Transverse colon (tissue), 4 donors: ENCODE measurements at regions of chr6 and their contacts with region 1.

Region 1: GRCh38 chr6:161370880-161371279 is 97.0 kb upstream of the AGPAT4 start:
- DNase-seq: peak; percentile 62
- H3K4me3 ChIP-seq: no peak overlapping the region
- H3K27ac ChIP-seq: no peak overlapping the region
- H3K4me1 ChIP-seq: peaks cover 1 to 9% (median 5%) of the 10 kb centered on the region in 4 donors
- H3K27me3 ChIP-seq: no peaks in the 10 kb centered on the region
- CTCF ChIP-seq: peak; percentile 84 to 90 (median 85)
- EP300 ChIP-seq: no peak
- POLR2A ChIP-seq: no peak

Region 2: DNA sequence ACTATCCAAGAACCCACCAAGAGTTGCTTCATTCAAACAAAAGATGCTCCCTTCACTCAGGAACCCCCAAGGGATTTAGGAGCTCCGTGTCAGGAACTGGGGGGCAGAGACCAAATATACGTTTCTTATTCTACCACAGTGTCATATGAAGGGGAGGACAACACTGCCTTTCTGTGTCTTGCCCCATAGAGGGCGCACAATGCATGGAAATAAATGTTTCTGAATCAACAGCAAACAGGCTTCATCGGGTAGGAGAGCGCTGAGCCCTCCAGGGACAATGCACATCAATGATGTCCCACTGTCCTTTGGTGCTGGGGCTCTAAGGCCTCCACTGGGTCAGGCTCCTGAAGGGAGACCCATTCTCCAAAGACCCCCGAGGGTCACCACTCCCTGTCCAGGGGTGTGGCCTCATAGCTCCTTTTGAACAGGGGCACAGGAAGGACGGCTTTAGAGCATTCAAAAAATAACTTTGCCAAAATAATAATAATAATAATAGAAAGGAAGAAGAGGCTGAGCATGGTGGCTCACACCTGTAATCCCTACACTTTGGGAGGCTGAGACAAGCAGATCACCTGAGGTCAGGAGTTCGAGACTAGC is 637.7 kb before region 1 on chr6:
- in situ Hi-C with region 1: loop called (anchors 25 kb)
- intact Hi-C with region 1: no loop called
- DNase-seq: peak; percentile 13
- H3K4me3 ChIP-seq: no peak overlapping the region
- H3K27ac ChIP-seq: no peak overlapping the region
- H3K4me1 ChIP-seq: no peaks in the 10 kb centered on the region
- H3K27me3 ChIP-seq: no peaks in the 10 kb centered on the region
- CTCF ChIP-seq: peak; percentile 33 to 56 (median 50)
- EP300 ChIP-seq: no peak
- POLR2A ChIP-seq: no peak

Region 3: DNA sequence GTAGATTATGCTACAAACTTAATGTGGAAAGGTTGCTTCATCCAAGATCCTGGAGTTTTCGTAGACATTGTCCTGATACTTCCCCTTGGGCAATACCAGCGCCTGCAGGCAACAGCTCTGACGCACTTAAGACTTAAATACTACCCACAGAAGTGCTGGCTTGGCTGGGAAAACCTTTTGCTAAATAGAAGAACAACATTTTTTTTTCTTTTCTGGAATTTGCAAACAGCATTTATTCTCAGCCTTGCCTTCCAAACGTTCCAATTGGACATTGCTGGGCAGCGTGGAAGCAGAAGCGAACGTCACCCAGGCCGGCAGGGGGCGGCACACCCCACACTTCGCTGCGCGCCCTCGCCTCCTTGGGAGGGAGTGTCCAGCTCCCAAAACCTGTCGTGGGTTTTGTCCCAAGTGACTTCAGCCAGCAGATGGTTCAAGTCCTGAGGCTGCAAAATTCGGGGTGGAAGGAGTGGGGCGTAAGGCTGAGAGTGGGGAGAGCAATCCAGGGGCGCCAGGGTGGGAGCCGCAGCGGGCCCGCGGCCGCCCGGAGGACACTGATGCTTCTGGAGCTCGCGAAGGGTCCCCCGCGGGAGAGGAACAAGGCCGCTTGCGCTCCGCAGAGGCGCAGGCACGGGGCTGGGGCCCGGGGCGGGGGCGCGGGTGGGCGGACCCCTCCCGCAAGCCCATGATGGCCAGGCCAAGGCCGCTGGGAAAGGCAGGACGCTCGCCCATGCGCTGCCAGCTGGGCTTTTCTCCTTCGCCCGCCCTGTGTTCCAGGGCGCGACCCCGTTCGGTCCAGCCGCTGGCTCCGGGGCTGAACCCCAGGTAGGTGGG is 440.1 kb before region 1 on chr6:
- in situ Hi-C with region 1: loop called (anchors 5 to 10 kb)
- intact Hi-C with region 1: loop called (anchors 5 kb)
- DNase-seq: peak; percentile 69
- H3K4me3 ChIP-seq: peak overlapping the region; percentile 21 to 41 (median 30)
- H3K27ac ChIP-seq: peak overlapping the region in 1 of 4 donors; percentile 3
- H3K4me1 ChIP-seq: peaks cover 0 to 11% (median 6%) of the 10 kb centered on the region in 4 donors
- H3K27me3 ChIP-seq: peaks cover 33% of the 10 kb centered on the region
- CTCF ChIP-seq: peak; percentile 83 to 92 (median 87)
- EP300 ChIP-seq: no peak
- POLR2A ChIP-seq: no peak

Region 4: DNA sequence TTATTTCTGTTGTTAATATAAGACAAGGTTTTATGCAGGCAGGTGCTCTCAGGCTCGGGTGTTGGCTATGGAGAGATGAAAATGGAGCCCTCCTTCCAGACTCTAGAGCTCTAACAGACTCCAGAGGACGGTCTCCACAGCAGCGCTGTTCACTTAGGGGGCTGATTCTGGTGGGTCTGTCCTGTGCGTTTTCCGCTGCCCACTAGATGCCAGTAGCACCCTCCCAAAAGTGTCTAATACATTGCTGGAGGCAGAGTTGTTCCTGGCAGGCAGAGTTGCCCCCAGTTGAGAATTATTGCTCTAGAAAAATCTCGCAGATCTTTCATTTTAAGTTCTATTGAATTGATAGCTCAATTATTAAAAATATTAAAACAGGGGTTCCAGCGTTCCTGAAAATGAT is 269.4 kb before region 1 on chr6:
- in situ Hi-C with region 1: loop called in 1 of 4 experiments (anchors 25 kb)
- intact Hi-C with region 1: no loop called
- DNase-seq: no peak
- H3K4me3 ChIP-seq: no peak overlapping the region
- H3K27ac ChIP-seq: no peak overlapping the region
- H3K4me1 ChIP-seq: no peaks in the 10 kb centered on the region
- H3K27me3 ChIP-seq: no peaks in the 10 kb centered on the region
- CTCF ChIP-seq: peak in 1 of 5 experiments; percentile 4
- EP300 ChIP-seq: no peak
- POLR2A ChIP-seq: no peak

Region 5: DNA sequence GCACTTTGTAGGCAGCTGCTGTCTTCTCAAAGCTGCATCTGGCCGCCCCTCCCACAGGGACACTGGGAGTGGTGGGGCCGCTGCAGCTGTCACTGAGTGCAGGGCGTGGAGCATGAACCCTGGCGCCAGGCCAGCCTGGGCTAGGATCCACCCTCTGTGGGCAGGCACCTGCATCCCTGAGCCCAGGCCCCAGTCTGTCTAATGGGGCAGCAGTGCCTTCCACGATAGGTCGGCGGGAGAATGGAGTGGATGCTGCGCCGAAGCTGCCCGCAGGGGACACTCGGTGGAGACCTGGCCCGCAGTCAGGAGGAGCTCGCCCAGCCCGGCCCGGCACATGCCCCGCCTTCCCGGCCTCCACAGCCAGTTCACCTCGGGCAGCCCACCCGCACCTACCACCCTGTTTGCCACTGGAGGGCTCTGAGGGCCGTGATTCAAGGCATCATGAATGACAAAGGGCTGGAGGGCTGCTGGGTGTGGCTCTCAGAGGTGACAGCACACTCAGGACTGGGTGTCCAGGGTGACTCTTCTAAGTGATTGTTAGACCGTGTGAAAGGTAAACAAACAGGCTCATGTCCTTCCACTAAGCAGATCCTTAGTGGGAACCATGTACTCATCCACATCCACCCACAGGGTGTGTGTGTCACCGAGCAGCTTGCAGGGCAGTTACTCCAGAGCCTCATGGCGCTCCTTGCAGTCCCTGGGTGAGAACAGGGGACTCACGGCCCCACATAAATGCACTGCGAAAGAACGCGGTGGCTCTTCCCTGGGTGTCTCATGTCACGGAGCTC is 230.9 kb before region 1 on chr6:
- in situ Hi-C with region 1: loop called in 1 of 4 experiments (anchors 25 kb)
- intact Hi-C with region 1: no loop called
- DNase-seq: peak; percentile 72
- H3K4me3 ChIP-seq: no peak overlapping the region
- H3K27ac ChIP-seq: no peak overlapping the region
- H3K4me1 ChIP-seq: no peaks in the 10 kb centered on the region
- H3K27me3 ChIP-seq: no peaks in the 10 kb centered on the region
- CTCF ChIP-seq: peak in 1 of 5 experiments; percentile 42
- EP300 ChIP-seq: no peak
- POLR2A ChIP-seq: no peak

Region 6: DNA sequence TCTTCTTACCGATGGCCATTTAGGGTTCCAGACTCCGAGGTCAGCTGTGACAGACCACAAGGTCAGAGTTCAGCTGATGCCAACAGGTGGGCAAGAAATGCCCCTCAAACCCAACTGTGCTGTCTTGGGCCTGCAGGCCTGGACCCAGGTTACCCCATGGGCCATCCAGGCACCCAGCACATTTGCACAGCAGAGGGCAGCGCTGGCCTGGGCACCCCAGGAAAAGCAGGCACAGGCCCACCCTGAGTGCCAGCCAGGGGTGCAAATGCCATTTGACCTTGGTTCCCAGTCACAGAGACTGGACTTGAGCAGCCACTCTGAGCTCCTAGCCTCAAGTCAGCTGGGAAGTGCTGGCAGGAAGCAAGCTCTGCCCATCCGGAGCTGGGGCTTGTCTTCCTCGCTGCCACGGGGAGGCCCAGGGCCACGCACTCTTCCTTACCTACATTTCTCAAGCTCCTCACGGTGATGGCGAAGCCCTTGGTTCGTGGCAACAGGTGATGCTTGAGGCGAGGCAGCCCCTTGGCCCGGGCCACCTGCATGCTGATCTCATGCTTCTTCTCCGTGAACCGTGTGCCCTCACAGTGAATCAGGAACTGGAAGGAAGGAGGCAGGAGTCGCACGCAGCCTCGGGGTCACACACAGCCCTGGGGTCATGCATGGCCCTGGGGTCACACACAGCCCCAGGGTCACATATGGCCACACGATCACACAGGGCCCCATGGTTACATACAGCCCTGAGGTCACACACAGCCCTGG is 217.8 kb before region 1 on chr6:
- in situ Hi-C with region 1: loop called in 2 of 4 experiments (anchors 25 kb)
- intact Hi-C with region 1: loop called (anchors 10 kb)
- DNase-seq: no peak
- H3K4me3 ChIP-seq: no peak overlapping the region
- H3K27ac ChIP-seq: no peak overlapping the region
- H3K4me1 ChIP-seq: no peaks in the 10 kb centered on the region
- H3K27me3 ChIP-seq: no peaks in the 10 kb centered on the region
- CTCF ChIP-seq: peak in 4 of 5 experiments; percentile 18 to 44 (median 26)
- EP300 ChIP-seq: no peak
- POLR2A ChIP-seq: no peak

Region 7: GRCh38 chr6:161168281-161168891 is 202.5 kb before region 1 on chr6:
- in situ Hi-C with region 1: loop called in 1 of 4 experiments (anchors 25 kb)
- intact Hi-C with region 1: no loop called
- DNase-seq: no peak
- H3K4me3 ChIP-seq: no peak overlapping the region
- H3K27ac ChIP-seq: no peak overlapping the region
- H3K4me1 ChIP-seq: no peaks in the 10 kb centered on the region
- H3K27me3 ChIP-seq: no peaks in the 10 kb centered on the region
- CTCF ChIP-seq: no peak
- EP300 ChIP-seq: no peak
- POLR2A ChIP-seq: no peak

Region 8: GRCh38 chr6:161200610-161201370 is 170.1 kb before region 1 on chr6:
- in situ Hi-C with region 1: no loop called
- intact Hi-C with region 1: no loop called
- DNase-seq: no peak
- H3K4me3 ChIP-seq: no peak overlapping the region
- H3K27ac ChIP-seq: no peak overlapping the region
- H3K4me1 ChIP-seq: no peaks in the 10 kb centered on the region
- H3K27me3 ChIP-seq: no peaks in the 10 kb centered on the region
- CTCF ChIP-seq: no peak
- EP300 ChIP-seq: no peak
- POLR2A ChIP-seq: no peak

Region 9: GRCh38 chr6:162525181-162525580 is 1154.3 kb after region 1 on chr6:
- in situ Hi-C with region 1: no loop called
- intact Hi-C with region 1: no loop called
- DNase-seq: no peak
- H3K4me3 ChIP-seq: no peak overlapping the region
- H3K27ac ChIP-seq: no peak overlapping the region
- H3K4me1 ChIP-seq: peaks cover 0 to 17% (median 5%) of the 10 kb centered on the region in 4 donors
- H3K27me3 ChIP-seq: no peaks in the 10 kb centered on the region
- CTCF ChIP-seq: no peak
- EP300 ChIP-seq: no peak
- POLR2A ChIP-seq: no peak